T-cell (primary cell): ENCODE measurements at regions of chr2 and their contacts with region 1.

Region 1: GRCh38 chr2:61538200-61538919 is at the start of gene XPO1:
- DNase-seq: peak; percentile 97 to 100 (median 99)
- ATAC-seq: peak; percentile 82 to 86 (median 82)
- H3K4me3 ChIP-seq: peak within 1 kb of the TSS; percentile 61 to 81
- H3K4me3 Mint-ChIP-seq: peak within 1 kb of the TSS; percentile 90 to 99 (median 93)
- H3K27ac ChIP-seq: peak within 1 kb of the TSS; percentile 95
- H3K27ac Mint-ChIP-seq: peak within 1 kb of the TSS; percentile 99 to 100
- H3K4me1 ChIP-seq: peaks cover 12 to 26% of the 10 kb centered on the region in 2 experiments
- H3K4me1 Mint-ChIP-seq: peaks cover 37 to 41% (median 40%) of the 10 kb centered on the region in 3 donors
- H3K27me3 ChIP-seq: no peaks in the 10 kb centered on the region
- H3K27me3 Mint-ChIP-seq: peaks cover 0 to 1% of the 10 kb centered on the region in 2 donors
- total RNA-seq, gene XPO1: 116 to 142 (median 130) TPM

Region 2: GRCh38 chr2:61764035-61764800 is 225.9 kb after region 1 on chr2:
- CTCF ChIA-PET with region 1: interaction called in 1 of 2 experiments, 3 read pairs
- POLR2A ChIA-PET with region 1: interaction called in 1 of 2 experiments, 16 read pairs
- DNase-seq: peak; percentile 85 to 98 (median 96)
- ATAC-seq: peak; percentile 96 to 99 (median 98)
- H3K4me3 ChIP-seq: peak overlapping the region; percentile 90 to 96
- H3K4me3 Mint-ChIP-seq: peak overlapping the region; percentile 94 to 95 (median 94)
- H3K27ac ChIP-seq: peak overlapping the region; percentile 98
- H3K27ac Mint-ChIP-seq: peak overlapping the region; percentile 95 to 99
- H3K4me1 ChIP-seq: peaks cover 2 to 9% of the 10 kb centered on the region in 2 experiments
- H3K4me1 Mint-ChIP-seq: peaks cover 14 to 23% (median 19%) of the 10 kb centered on the region in 3 donors
- H3K27me3 ChIP-seq: no peaks in the 10 kb centered on the region
- H3K27me3 Mint-ChIP-seq: no peaks in the 10 kb centered on the region